Heart left ventricle (tissue), 16 donors: ENCODE measurements at regions of chr12 and their contacts with region 1.

Region 1: GRCh38 chr12:114668151-114668885 is 15.7 kb downstream of the TBX3 start:
- DNase-seq: peak; percentile 76 to 87 (median 82)
- ATAC-seq: peak; percentile 82 to 93 (median 90)
- H3K4me3 ChIP-seq: peak overlapping the region in 11 of 12 donors; percentile 23 to 60 (median 50)
- H3K27ac ChIP-seq: peak overlapping the region in 9 of 12 donors; percentile 11 to 63 (median 45)
- H3K4me1 ChIP-seq: peaks cover 0 to 46% (median 8%) of the 10 kb centered on the region in 12 donors
- H3K27me3 ChIP-seq: peaks cover 24 to 85% (median 44%) of the 10 kb centered on the region in 9 donors
- CTCF ChIP-seq: peak; percentile 19 to 78 (median 62)
- POLR2A ChIP-seq: no peak

Region 2: GRCh38 chr12:113940357-113941207 is 727.7 kb before region 1 on chr12:
- intact Hi-C with region 1: no loop called
- DNase-seq: no peak
- ATAC-seq: peak in 1 of 4 donors; percentile 19
- H3K4me3 ChIP-seq: no peak overlapping the region
- H3K27ac ChIP-seq: no peak overlapping the region
- H3K4me1 ChIP-seq: no peaks in the 10 kb centered on the region
- H3K27me3 ChIP-seq: no peaks in the 10 kb centered on the region
- CTCF ChIP-seq: no peak
- POLR2A ChIP-seq: no peak

Region 3: DNA sequence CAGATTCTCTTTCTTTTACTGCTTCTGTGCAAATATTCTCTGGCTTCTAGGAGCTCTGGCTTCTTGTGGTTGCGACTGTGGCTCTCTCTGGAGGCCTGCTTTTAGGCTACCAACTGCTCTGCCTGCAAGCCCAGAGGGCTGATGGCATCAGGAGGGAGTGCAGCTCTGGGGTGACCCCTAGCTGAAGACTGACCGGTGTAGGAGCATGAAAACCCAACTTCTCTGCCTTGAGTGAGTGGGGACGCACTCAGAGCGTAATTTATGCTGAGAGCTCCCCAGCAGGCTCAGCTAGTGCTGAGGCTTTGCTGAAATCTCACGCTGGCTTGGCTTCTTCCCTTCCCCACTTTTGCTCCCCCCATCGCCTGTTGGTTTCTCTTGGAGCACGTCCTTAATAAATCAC is 672.3 kb before region 1 on chr12:
- intact Hi-C with region 1: no loop called
- DNase-seq: no peak
- ATAC-seq: no peak
- H3K4me3 ChIP-seq: no peak overlapping the region
- H3K27ac ChIP-seq: no peak overlapping the region
- H3K4me1 ChIP-seq: no peaks in the 10 kb centered on the region
- H3K27me3 ChIP-seq: peaks cover 0 to 31% (median 7%) of the 10 kb centered on the region in 9 donors
- CTCF ChIP-seq: no peak
- POLR2A ChIP-seq: no peak

Region 4: DNA sequence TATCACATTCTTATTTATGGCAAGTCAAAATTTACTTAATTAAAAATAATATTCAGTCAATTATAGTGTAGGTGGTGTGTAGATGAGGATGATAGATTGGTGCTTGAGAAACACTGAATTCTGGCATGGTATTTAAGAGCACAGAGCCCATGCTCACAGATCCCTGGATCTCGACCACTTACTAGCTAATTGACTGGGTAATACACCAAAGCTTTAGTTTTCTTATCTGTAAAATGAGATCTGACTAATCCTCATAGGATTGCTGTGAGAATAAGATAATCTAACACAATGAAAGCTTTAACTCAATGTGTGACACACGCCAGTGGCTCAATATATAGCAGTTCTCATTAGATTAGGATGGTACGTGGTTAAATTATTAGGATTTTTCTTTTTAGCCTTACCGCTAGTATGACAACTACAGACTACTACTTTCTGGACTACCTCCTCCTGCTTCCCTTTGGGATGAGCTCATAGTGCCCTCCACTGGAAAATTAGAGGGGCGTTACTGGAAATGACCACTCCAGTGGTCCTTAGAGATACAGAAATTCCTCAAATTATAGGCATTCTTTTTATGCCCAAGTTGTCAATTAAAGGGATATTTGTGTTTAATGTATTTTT is 498.5 kb after region 1 on chr12:
- intact Hi-C with region 1: loop called in 6 of 10 experiments (anchors 1 to 10 kb)
- DNase-seq: peak in 1 of 5 donors; percentile 11
- ATAC-seq: peak in 1 of 4 donors; percentile 50
- H3K4me3 ChIP-seq: no peak overlapping the region
- H3K27ac ChIP-seq: no peak overlapping the region
- H3K4me1 ChIP-seq: no peaks in the 10 kb centered on the region
- H3K27me3 ChIP-seq: no peaks in the 10 kb centered on the region
- CTCF ChIP-seq: peak in 9 of 12 donors; percentile 14 to 60 (median 38)
- POLR2A ChIP-seq: no peak

Region 5: DNA sequence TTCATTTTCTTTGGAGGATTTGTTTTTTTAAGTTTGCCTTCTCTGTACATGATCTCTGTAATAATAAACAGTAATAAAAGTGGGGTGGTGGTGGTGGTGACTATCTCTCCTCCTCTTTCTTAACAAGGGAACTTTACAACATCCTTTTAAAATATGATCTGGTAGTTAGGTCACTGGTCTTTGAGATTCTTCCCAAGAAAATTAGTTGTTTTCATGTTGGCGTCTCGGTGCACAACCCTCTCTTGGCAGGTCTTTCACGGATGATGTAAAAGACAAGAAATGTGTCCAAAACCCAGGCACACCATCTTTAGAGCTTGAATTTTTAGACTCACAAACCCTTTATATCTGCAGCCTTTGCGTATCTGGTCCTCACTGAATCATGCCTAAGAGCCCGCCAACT is 504.2 kb after region 1 on chr12:
- intact Hi-C with region 1: loop called in 6 of 10 experiments (anchors 1 to 10 kb)
- DNase-seq: no peak
- ATAC-seq: no peak
- H3K4me3 ChIP-seq: no peak overlapping the region
- H3K27ac ChIP-seq: no peak overlapping the region
- H3K4me1 ChIP-seq: peaks cover 0 to 8% (median 0%) of the 10 kb centered on the region in 12 donors
- H3K27me3 ChIP-seq: no peaks in the 10 kb centered on the region
- CTCF ChIP-seq: no peak
- POLR2A ChIP-seq: no peak

Region 6: DNA sequence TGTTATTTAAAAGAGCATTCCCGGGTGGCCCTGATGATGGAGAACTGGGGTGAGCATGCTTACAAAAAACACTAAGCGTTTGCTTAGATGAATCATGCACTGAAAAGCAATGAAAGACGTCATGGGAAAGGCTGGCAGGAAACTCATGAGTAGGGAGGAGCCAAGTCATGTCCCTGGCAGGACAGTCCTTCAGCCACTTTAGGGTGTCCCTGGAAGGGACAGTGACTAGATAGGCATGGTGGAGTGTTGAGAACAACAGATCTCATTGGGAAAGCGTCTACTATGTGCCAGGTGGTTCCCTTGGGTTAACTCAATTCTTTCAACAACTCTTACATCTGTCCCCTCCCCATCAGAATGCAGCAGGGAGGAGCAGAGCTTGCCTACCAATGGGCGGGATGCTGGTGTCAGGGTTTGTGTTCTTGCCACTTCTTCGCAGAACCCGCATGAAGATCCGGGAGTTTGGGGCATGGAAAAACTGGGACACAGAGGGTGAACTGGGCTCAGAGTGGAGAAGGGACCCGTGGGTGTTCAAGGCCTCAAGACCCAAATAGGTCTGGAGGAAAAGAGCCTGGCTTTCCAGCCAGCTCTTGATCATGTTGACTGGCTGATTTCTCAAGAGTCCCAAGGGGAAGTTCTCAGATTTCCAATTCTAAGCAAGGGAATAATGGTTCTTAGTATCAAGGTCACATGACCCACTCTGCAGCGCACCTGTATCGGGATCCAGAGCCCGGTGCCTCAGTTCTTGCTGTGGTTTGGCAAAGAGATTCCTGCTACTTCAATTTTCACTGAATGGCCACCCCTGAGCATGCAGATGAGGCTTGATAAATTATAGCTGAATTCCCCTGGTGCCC is 669.6 kb after region 1 on chr12:
- intact Hi-C with region 1: loop called in 1 of 10 experiments (anchors 5 kb)
- DNase-seq: peak in 4 of 5 donors; percentile 44 to 72 (median 57)
- ATAC-seq: peak; percentile 86 to 93 (median 92)
- H3K4me3 ChIP-seq: no peak overlapping the region
- H3K27ac ChIP-seq: peak overlapping the region in 11 of 12 donors; percentile 29 to 72 (median 56)
- H3K4me1 ChIP-seq: peaks cover 0 to 33% (median 3%) of the 10 kb centered on the region in 12 donors
- H3K27me3 ChIP-seq: no peaks in the 10 kb centered on the region
- CTCF ChIP-seq: no peak
- POLR2A ChIP-seq: peak in 1 of 2 donors; percentile 16

Region 7: GRCh38 chr12:115623764-115624334 is 955.5 kb after region 1 on chr12:
- intact Hi-C with region 1: loop called in 1 of 10 experiments (anchors 5 kb)
- DNase-seq: peak; percentile 81 to 88 (median 86)
- ATAC-seq: peak; percentile 87 to 97 (median 88)
- H3K4me3 ChIP-seq: no peak overlapping the region
- H3K27ac ChIP-seq: peak overlapping the region in 7 of 12 donors; percentile 24 to 70 (median 56)
- H3K4me1 ChIP-seq: peaks cover 0 to 11% (median 0%) of the 10 kb centered on the region in 12 donors
- H3K27me3 ChIP-seq: peaks cover 0 to 5% (median 0%) of the 10 kb centered on the region in 9 donors
- CTCF ChIP-seq: no peak
- POLR2A ChIP-seq: no peak

Region 8: GRCh38 chr12:115632308-115632707 is 964.0 kb after region 1 on chr12:
- intact Hi-C with region 1: loop called (anchors 1 to 10 kb)
- DNase-seq: no peak
- ATAC-seq: no peak
- H3K4me3 ChIP-seq: no peak overlapping the region
- H3K27ac ChIP-seq: no peak overlapping the region
- H3K4me1 ChIP-seq: no peaks in the 10 kb centered on the region
- H3K27me3 ChIP-seq: no peaks in the 10 kb centered on the region
- CTCF ChIP-seq: peak in 11 of 12 donors; percentile 12 to 56 (median 36)
- POLR2A ChIP-seq: no peak